ENCODE measurements at regions of chr11 and their contacts with region 1.

Region 1: GRCh38 chr11:6682936-6683861 is at the start of gene MRPL17:
- DNase-seq: peak; percentile 95 to 100 (median 99)
- ATAC-seq: peak; percentile 99
- H3K4me3 ChIP-seq: peak within 1 kb of the TSS; percentile 75
- H3K4me3 Mint-ChIP-seq: peak within 1 kb of the TSS; percentile 83 to 99 (median 98)
- H3K27ac ChIP-seq: peak within 1 kb of the TSS; percentile 85
- H3K27ac Mint-ChIP-seq: peak within 1 kb of the TSS; percentile 94 to 99 (median 99)
- H3K4me1 ChIP-seq: peaks cover 7 to 10% of the 10 kb centered on the region in 2 donors
- H3K4me1 Mint-ChIP-seq: peaks cover 18 to 58% (median 44%) of the 10 kb centered on the region in 7 donors
- H3K27me3 ChIP-seq: no peaks in the 10 kb centered on the region
- H3K27me3 Mint-ChIP-seq: peaks cover 0 to 3% (median 0%) of the 10 kb centered on the region in 5 donors
- total RNA-seq, gene MRPL17: 10.0 to 70.3 (median 26.4) TPM

Region 2: DNA sequence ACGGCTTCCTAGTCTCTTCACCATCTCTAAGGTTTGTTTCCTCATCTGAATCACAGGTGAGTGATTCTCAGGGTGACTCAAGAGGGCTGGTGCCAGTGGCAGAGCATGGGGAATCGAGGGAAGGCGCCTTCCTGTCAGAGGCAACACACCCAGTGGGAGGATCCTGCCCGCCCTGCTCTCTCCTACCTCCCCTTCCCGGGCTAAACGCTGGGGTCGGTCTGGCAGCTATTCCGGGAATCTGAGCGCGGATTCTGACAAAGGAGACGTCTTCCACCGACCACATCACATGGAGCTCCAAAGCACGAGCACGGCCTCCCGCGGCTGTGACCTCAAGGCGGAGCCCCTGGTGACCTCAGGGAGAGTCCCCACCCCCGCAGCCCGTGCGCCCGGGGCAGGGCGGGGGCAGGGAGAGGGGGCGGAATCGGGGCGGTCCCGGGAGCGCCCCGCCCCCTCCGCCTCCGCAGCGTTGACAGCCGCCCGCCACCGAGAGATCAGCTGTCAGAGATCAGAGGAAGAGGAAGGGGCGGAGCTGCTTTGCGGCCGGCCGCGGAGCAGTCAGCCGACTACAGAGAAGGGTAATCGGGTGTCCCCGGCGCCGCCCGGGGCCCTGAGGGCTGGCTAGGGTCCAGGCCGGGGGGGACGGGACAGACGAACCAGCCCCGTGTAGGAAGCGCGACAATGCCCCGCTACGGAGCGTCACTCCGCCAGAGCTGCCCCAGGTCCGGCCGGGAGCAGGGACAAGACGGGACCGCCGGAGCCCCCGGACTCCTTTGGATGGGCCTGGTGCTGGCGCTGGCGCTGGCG is 293.1 kb before region 1 on chr11 and contains the start of gene SMPD1:
- CTCF ChIA-PET with region 1: no interaction called
- POLR2A ChIA-PET with region 1: no interaction called
- intact Hi-C with region 1: loop called (anchors 1 to 5 kb)
- DNase-seq: peak; percentile 85 to 94 (median 92)
- ATAC-seq: peak; percentile 97
- H3K4me3 ChIP-seq: peak within 1 kb of the TSS; percentile 94
- H3K4me3 Mint-ChIP-seq: peak within 1 kb of the TSS; percentile 91 to 98 (median 94)
- H3K27ac ChIP-seq: peak within 1 kb of the TSS; percentile 95
- H3K27ac Mint-ChIP-seq: peak within 1 kb of the TSS; percentile 93 to 100 (median 99)
- H3K4me1 ChIP-seq: peaks cover 25 to 53% of the 10 kb centered on the region in 2 donors
- H3K4me1 Mint-ChIP-seq: peaks cover 31 to 74% (median 66%) of the 10 kb centered on the region in 7 donors
- H3K27me3 ChIP-seq: no peaks in the 10 kb centered on the region
- H3K27me3 Mint-ChIP-seq: peaks cover 0 to 13% (median 0%) of the 10 kb centered on the region in 5 donors
- total RNA-seq, gene SMPD1: 43.0 to 70.9 (median 55.4) TPM

Region 3: DNA sequence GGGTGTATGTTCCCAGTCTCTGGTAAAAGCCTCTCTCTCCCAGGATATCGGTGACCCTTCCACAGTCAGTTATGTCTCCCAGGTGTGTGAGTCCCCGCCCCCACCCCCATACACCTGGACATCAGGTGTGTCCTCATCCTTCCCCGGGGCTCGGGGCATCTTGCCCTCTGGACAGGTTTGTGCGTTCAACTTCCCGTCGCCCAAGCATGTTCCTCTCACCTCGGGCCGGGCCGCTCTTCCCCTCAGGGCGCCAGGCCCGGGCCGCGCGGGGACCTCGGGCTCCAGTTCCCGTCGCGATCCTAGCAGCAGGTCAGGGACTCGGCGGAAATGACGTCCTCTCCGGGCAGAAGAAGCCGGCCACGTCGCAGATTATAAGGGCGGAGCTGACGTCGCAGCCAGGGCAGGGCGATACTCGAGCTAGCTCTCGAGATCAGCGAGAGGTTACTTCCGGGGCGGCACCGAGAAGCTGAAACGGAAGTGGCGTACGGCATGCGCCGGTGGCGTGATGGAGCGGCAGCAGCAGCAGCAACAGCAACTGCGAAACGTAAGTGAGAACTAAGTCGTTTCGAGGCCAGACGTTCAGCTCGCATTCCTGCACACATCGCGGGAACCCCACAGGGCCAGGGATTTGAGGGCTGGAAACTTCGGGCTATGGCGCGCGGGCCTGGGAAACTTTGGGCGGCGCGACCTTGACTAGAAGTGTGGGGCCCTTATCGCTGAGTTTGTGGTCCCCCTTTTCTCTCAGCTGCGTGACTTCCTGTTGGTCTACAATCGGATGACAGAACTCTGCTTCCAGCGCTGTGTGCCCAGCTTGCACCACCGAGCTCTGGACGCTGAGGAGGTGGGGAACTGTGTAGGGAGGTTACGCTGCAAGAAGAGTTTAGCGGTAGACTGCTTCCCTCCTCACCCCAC is 201.9 kb before region 1 on chr11 and contains the starts of genes ARFIP2 and TIMM10B:
- CTCF ChIA-PET with region 1: no interaction called
- POLR2A ChIA-PET with region 1: interaction called, 14 read pairs
- intact Hi-C with region 1: loop called (anchors 1 kb)
- DNase-seq: peak; percentile 83 to 98 (median 94)
- ATAC-seq: peak; percentile 98
- H3K4me3 ChIP-seq: peak within 1 kb of the TSS; percentile 74
- H3K4me3 Mint-ChIP-seq: peak within 1 kb of the TSS; percentile 87 to 99 (median 97)
- H3K27ac ChIP-seq: peak within 1 kb of the TSS; percentile 86
- H3K27ac Mint-ChIP-seq: peak within 1 kb of the TSS; percentile 93 to 99 (median 98)
- H3K4me1 ChIP-seq: peaks cover 22 to 24% of the 10 kb centered on the region in 2 donors
- H3K4me1 Mint-ChIP-seq: peaks cover 29 to 48% (median 43%) of the 10 kb centered on the region in 7 donors
- H3K27me3 ChIP-seq: no peaks in the 10 kb centered on the region
- H3K27me3 Mint-ChIP-seq: no peaks in the 10 kb centered on the region
- total RNA-seq, gene ARFIP2: 48.6 to 63.4 (median 53.8) TPM
- total RNA-seq, gene TIMM10B: 39.3 to 68.4 (median 59.2) TPM

Region 4: DNA sequence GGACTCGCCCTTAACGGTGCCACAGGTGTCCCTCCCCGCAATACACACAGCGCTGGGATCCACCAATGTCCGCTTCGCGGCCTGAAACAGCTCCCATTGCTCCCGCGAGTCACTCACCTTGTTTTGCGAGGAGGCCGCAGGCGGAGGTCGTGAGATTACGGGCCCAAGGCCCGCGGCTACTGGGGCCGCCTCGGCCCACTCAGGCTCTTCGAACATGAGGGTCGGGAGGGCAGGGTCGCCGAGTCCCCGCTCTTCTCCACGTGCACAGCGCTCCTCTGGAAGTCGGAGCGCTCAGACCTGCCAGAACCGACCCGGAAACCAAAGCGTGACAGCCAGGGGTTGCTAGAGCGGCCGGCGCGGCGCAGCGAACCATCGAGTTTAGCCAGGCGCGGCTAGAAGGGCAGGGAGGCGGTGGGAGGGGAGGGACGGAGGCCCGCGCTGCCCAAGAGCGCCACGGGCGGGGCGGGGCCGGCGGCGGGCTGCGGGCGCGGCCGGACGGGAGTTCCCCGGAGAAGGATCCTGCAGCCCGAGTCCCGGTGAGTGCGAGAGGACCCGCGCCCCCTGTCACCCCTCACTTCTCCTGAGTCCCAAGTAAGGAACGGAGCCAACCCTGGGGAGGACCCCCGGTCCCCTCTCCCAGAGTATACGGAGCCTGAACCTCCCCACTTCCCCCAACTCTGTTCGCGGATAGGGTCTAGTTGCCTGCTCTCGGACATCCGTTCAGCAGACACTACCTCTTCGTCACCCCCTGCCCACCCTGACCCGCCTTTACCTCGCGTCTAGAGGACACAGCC is 79.7 kb before region 1 on chr11 and contains the starts of genes ILK and RRP8:
- CTCF ChIA-PET with region 1: interaction called, 41 read pairs
- POLR2A ChIA-PET with region 1: interaction called, 170 read pairs
- intact Hi-C with region 1: loop called (anchors 1 kb)
- DNase-seq: peak; percentile 69 to 86 (median 78)
- ATAC-seq: peak; percentile 92
- H3K4me3 ChIP-seq: peak within 1 kb of the TSS; percentile 85
- H3K4me3 Mint-ChIP-seq: no peak within 1 kb of the TSS
- H3K27ac ChIP-seq: peak within 1 kb of the TSS; percentile 86
- H3K27ac Mint-ChIP-seq: no peak within 1 kb of the TSS
- H3K4me1 ChIP-seq: peaks cover 51% of the 10 kb centered on the region in 2 donors
- H3K4me1 Mint-ChIP-seq: peaks cover 9 to 33% (median 21%) of the 10 kb centered on the region in 7 donors
- H3K27me3 ChIP-seq: no peaks in the 10 kb centered on the region
- H3K27me3 Mint-ChIP-seq: no peaks in the 10 kb centered on the region
- total RNA-seq, gene ILK: 34.4 to 165 (median 89.6) TPM
- total RNA-seq, gene RRP8: 21.4 to 37.9 (median 27.9) TPM

Region 5: GRCh38 chr11:6646918-6647679 is 36.1 kb before region 1 on chr11:
- CTCF ChIA-PET with region 1: interaction called, 7 read pairs
- POLR2A ChIA-PET with region 1: interaction called, 11 read pairs
- intact Hi-C with region 1: loop called in 1 of 2 experiments (anchors 1 kb)
- DNase-seq: peak in 6 of 9 donors; percentile 32 to 39 (median 35)
- ATAC-seq: peak; percentile 73
- H3K4me3 ChIP-seq: peak overlapping the region; percentile 35
- H3K4me3 Mint-ChIP-seq: no peak overlapping the region
- H3K27ac ChIP-seq: peak overlapping the region; percentile 72
- H3K27ac Mint-ChIP-seq: no peak overlapping the region
- H3K4me1 ChIP-seq: peaks cover 21 to 49% of the 10 kb centered on the region in 2 donors
- H3K4me1 Mint-ChIP-seq: no peaks in the 10 kb centered on the region
- H3K27me3 ChIP-seq: no peaks in the 10 kb centered on the region
- H3K27me3 Mint-ChIP-seq: no peaks in the 10 kb centered on the region

Region 6: DNA sequence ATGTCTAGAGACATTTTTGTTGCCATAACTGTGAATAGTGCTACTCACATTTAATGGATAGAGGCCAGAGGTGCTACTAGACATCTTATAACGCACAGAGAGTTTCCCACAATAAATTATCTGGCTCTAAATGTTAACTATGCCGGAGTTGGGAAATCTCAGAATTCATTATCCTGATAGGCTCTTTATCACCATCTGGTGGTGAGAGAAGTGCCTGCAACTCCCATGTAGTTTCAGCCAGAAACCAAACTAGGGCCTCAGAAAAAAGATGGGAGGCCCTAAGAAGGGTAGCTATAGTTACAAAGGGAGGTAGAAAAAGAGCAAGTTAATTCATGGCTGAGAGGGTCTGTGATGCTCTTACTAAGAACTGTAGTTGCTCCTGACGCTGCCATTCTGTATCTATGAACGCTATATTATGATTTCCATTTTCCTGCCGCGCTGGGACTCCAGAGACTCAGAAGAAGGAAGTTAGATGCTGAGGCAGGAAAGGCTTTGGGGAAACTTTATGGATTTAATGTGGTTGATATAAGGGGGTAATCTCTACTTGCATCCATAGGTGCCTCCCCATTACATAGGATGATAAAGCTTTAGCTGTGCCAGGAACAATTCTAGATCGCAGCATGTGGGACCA is 22.8 kb after region 1 on chr11:
- CTCF ChIA-PET with region 1: interaction called, 10 read pairs
- POLR2A ChIA-PET with region 1: interaction called, 5 read pairs
- intact Hi-C with region 1: loop called in 1 of 2 experiments (anchors 1 kb)
- DNase-seq: peak in 8 of 9 donors; percentile 20 to 49 (median 38)
- ATAC-seq: peak; percentile 79
- H3K4me3 ChIP-seq: no peak overlapping the region
- H3K4me3 Mint-ChIP-seq: no peak overlapping the region
- H3K27ac ChIP-seq: peak overlapping the region; percentile 28
- H3K27ac Mint-ChIP-seq: peak overlapping the region in 8 of 9 donors; percentile 36 to 87 (median 76)
- H3K4me1 ChIP-seq: no peaks in the 10 kb centered on the region
- H3K4me1 Mint-ChIP-seq: peaks cover 11 to 39% (median 17%) of the 10 kb centered on the region in 7 donors
- H3K27me3 ChIP-seq: no peaks in the 10 kb centered on the region
- H3K27me3 Mint-ChIP-seq: no peaks in the 10 kb centered on the region